ENCODE measurements at regions of chr18 and their contacts with region 1.

Region 1: DNA sequence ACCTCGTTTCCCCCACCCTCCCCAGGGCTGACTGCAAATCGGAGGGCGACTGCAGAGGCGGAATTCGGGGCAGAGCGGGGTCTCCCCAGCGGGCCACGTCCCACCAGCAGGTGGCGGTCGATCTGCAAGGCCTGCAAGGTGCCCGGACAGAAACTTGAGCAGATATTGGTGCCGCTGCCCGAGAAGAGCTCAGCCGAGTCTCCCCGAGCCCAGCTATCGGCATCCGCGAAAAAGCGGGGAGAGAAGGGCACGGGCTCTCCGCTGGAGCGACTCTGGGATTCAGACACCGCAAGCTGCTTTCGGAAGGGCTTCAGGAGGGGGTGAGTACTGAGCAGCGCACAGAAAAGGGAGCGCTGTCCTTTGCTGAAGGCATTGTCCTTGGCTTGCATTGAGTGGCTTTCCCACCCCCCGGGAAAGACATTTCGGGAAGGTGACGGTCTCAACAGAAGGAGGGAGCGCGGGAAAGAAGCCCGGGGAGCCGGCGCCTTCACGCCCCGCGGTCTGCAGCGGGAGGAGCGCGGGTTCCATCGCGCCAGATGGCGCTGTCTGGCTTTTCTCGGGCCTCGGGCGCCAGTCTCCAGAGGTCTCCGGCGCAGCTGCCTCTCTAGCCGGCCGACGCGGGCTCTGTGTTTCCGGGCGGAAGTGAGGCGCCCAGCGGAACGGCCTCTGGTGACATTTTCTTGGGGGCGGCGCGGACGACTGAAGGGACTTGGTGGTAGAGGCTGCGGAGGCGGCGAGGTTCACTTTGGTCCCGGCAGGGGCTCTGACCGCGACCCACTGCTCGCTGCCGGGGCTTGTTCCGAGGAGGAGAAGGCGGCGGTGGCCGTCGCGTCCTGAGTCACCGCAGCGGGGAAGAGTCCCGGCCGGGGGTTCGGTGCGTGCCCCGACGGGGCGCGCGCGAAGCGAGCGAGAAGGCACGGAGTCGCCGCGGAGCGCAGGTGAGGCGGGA is 69.5 kb downstream of the HAUS1 start:
- H3K4me3 ChIP-seq: peak overlapping the region; percentile 86
- H3K27ac ChIP-seq: peak overlapping the region; percentile 100
- H3K4me1 ChIP-seq: 0 out of 2 replicates have a peak, but pooled peaks cover 9% of the 10 kb centered on the region
- CTCF ChIP-seq: peak; percentile 93

Region 2: GRCh38 chr18:46148810-46149209 is 24.9 kb before region 1 on chr18:
- CTCF ChIA-PET with region 1: interaction called, 57 read pairs
- POLR2A ChIA-PET with region 1: interaction called, 16 read pairs
- H3K4me3 ChIP-seq: no peak overlapping the region
- H3K27ac ChIP-seq: no peak overlapping the region
- H3K4me1 ChIP-seq: peaks cover 8% of the 10 kb centered on the region
- CTCF ChIP-seq: 0 out of 2 replicates have a peak, but pooled peaks have one; percentile 45

Region 3: DNA sequence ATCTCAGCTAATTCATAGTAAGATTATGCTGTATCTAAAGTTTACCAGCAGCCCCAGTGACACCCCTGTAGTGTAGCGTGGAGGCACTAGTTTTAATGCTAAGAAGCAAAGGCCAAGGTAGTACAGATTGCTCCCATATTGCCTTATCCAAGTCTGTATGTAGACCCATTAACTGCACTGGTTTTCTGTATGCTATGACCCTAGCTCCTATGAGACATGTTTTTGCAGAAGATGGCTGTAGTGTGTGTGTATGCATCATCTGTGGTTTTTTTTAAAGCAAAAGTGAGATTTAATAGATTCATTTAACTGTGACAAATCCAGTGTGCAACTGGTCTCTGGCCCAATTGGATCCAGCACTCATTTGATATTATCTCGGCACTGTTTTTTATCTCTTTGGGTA is 17.0 kb after region 1 on chr18:
- CTCF ChIA-PET with region 1: interaction called, 37 read pairs
- POLR2A ChIA-PET with region 1: interaction called, 7 read pairs
- H3K4me3 ChIP-seq: no peak overlapping the region
- H3K27ac ChIP-seq: no peak overlapping the region
- H3K4me1 ChIP-seq: no peaks in the 10 kb centered on the region
- CTCF ChIP-seq: no peak

Region 4: DNA sequence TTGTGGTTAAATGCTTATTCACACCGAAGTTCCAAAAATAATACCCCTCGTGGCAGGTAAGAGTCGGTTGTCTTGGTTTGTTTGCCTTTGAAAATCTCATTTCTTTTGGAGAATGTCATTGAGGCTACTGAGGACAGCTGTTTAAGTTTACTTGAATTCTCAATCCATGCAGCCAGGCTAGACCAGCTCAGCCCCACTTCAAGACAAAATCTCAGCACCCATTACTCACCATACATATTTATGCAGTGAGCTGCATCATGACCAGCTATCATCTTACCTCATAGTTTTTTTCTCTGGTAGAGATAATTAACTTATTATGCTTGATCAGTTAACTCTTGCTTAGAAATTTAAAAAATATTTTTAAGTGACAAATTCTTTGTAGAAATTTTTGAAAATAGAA is 46.4 kb after region 1 on chr18:
- CTCF ChIA-PET with region 1: interaction called, 33 read pairs
- POLR2A ChIA-PET with region 1: interaction called, 4 read pairs
- H3K4me3 ChIP-seq: no peak overlapping the region
- H3K27ac ChIP-seq: no peak overlapping the region
- H3K4me1 ChIP-seq: peaks cover 9% of the 10 kb centered on the region; the same call in 1 of the 2 replicates
- CTCF ChIP-seq: no peak

Region 5: DNA sequence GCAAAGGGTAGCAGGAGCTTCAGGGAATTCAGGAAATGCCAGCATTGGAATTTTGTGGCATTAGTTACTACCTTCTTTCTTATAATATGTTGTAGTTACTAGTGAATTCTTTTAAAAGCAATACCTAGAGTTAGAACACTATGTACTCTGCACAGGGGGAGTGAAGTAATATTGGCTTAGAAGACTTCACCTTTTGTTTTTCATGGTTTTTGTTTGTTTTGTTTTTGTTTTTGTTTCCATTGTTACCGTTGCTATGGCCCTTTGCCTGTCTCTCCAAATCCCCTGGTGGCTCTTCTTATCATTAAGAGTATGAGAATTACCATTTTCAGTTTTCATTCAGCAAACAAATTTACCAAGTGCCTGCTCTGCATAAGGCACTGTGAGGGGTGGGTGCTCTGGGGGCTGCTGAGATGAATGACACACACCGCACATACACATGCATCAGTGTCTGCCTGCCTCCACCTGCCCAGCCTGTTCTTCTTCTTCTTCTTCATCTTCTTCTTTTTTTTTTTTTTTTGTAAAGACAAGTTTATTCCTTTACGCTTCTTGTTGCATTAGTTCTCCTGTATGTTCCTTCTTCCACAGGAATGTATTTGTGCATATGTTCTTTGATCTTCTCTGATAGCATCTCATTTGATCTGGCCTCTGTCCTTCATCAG is 90.7 kb after region 1 on chr18:
- CTCF ChIA-PET with region 1: interaction called, 13 read pairs
- POLR2A ChIA-PET with region 1: no interaction called
- H3K4me3 ChIP-seq: no peak overlapping the region
- H3K27ac ChIP-seq: no peak overlapping the region
- H3K4me1 ChIP-seq: peaks cover 3% of the 10 kb centered on the region; the same call in 1 of the 2 replicates
- CTCF ChIP-seq: no peak

Region 6: DNA sequence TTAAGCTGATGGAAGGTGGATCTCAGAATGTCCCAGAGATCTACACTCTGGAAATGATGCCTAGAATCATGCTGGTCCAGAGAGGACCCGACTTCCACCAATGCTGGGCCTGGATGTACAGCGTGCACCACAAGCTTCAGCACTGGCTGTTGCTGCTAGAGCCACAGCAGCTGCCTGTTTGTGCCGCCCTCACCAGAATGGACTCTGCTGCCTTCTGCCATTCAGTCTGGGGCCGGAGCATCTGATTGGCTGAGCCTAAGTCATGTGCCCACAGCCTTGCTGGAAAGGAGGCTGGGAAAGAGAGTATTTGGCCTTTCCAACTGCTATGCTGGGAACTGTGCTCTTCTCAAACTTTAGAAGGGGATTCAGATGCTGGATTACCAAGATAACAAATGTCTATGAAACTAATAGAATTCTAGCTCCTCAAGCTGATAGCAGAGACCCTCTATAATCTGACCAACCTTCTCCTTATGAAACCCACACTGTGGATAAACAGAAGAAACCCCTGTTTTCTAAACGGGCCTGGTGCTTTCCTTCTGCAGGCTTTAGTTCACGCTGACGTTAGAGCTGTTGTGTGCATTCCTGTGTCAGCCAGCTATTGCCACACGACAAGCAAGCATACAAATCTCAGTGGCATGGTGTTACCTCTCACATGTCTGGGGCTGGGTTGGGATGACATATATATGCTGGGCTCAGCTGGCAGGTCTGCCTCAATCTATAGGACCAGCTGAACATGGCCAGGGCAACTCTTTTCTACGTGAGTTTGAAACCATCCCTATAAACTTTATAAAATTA is 487.5 kb after region 1 on chr18:
- CTCF ChIA-PET with region 1: interaction called, 64 read pairs
- POLR2A ChIA-PET with region 1: interaction called, 11 read pairs
- H3K4me3 ChIP-seq: no peak overlapping the region
- H3K27ac ChIP-seq: no peak overlapping the region
- H3K4me1 ChIP-seq: no peaks in the 10 kb centered on the region
- CTCF ChIP-seq: no peak

Measured in HEK293 (cell line).